Ovary (tissue), 10 donors: ENCODE measurements at regions of chr18 and their contacts with region 1.

Region 1: DNA sequence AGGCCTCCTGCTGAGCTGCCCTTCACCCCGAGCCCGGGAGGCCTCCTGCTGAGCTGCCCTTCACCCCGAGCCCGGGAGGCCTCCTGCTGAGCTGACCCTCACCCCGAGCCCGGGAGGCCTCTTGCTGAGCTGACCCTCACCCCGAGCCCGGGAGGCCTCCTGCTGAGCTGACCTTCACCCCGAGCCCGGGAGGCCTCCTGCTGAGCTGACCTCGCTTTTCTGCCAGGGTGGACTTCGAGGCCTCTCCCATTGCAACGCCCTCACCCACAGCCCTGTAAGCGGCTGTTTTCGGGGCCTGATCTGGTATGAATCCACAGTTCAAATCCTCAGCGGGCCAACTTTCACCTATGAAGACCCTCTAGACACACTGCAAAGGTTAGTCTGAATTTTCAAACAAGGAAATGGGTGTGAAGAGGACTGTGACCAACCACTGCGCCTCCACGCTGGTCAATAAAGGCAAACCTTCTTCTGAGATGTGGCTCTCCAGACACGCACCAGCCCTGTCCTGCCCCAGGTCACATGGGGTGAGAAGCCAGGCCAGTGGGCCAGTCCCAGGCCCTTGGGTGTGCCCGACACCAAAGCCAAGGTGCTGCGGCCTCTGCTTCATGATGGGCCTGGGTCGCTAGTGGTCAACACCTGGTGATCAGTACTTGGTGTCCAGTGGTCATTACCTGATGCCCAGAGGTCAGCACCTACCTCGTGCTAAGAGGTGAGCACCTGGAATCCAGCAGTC is 225.1 kb upstream of the SALL3 start:
- DNase-seq: peak in 1 of 5 donors; percentile 2
- H3K4me3 ChIP-seq: no peak overlapping the region
- H3K27ac ChIP-seq: no peak overlapping the region
- H3K4me1 ChIP-seq: no peaks in the 10 kb centered on the region
- H3K27me3 ChIP-seq: no peaks in the 10 kb centered on the region
- CTCF ChIP-seq: no peak
- EP300 ChIP-seq: no peak
- POLR2A ChIP-seq: no peak

Region 2: DNA sequence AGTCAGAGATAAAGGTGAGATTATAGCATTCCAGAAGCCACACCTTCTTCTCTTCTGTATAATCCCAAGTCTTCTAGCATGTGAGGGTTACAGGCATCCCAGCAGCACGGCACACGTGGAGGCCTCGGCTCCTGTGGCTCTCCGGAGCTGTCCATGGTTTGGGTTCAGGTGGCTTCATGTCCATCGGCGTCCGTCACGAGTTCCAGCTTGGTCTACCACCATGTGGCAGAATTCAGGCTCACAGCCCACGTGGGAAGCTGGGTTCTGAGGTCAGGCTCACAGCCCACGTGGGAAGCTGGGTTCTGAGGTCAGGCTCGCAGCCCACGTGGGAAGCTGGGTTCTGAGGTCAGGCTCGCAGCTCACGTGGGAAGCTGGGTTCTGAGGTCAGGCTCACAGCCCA is 153.1 kb before region 1 on chr18:
- intact Hi-C with region 1: loop called in 1 of 4 experiments (anchors 5 kb)
- DNase-seq: no peak
- H3K4me3 ChIP-seq: no peak overlapping the region
- H3K27ac ChIP-seq: no peak overlapping the region
- H3K4me1 ChIP-seq: no peaks in the 10 kb centered on the region
- H3K27me3 ChIP-seq: no peaks in the 10 kb centered on the region
- CTCF ChIP-seq: no peak
- EP300 ChIP-seq: no peak
- POLR2A ChIP-seq: no peak

Region 3: GRCh38 chr18:78770139-78770822 is 15.8 kb after region 1 on chr18:
- intact Hi-C with region 1: no loop called
- DNase-seq: no peak
- H3K4me3 ChIP-seq: no peak overlapping the region
- H3K27ac ChIP-seq: no peak overlapping the region
- H3K4me1 ChIP-seq: no peaks in the 10 kb centered on the region
- H3K27me3 ChIP-seq: no peaks in the 10 kb centered on the region
- CTCF ChIP-seq: no peak
- EP300 ChIP-seq: no peak
- POLR2A ChIP-seq: no peak